CD4-positive, alpha-beta memory T cell (primary cell): ENCODE measurements at regions of chr1 and their contacts with region 1.

Region 1: DNA sequence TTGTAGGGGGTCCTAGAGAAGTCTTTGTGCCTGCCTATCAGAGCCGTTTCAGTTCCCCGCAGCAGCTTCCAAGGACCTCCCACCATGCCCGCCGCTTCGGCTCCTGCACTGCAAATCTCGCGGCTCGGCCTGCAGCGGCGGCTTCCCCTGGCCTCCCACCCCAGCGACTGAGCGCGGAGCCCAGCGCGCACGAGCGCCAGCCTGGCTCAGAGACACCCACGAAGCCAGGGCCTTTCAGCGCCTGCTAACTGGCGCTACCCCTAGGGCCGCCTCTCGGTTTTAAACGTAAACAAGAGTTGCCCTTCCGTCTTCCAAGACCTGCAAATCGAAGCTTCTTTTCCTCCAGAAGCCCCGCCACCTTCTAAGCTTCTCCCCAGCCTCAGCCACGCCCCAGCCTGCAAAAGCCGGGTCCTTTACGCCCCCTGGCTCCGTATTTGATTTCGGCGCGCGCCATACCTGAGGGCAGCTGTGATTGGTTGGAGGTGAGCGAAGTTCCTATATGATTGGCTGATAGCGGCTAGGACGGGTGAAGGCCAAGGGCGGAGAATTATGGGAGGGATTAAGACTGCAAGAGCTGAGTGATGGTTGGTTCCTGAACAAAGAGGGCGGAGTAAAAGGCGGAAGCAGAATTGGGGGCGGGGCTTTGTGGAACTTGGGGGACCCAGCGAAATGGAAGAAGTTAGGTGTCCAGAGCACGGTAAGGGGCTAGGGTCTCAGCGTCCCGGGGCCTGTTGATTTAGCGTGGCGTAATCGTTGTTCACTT is at the start of gene TTF2:
- DNase-seq: peak; percentile 97 to 99 (median 98)
- H3K4me3 ChIP-seq: peak within 1 kb of the TSS; percentile 77 to 85
- H3K4me3 Mint-ChIP-seq: no peak within 1 kb of the TSS
- H3K27ac ChIP-seq: peak within 1 kb of the TSS; percentile 75
- H3K27ac Mint-ChIP-seq: peak within 1 kb of the TSS in 2 of 7 donors; percentile 81 to 84
- H3K4me1 ChIP-seq: peaks cover 40% of the 10 kb centered on the region
- H3K4me1 Mint-ChIP-seq: peaks cover 23 to 46% (median 29%) of the 10 kb centered on the region in 4 donors
- H3K27me3 ChIP-seq: no peaks in the 10 kb centered on the region
- H3K27me3 Mint-ChIP-seq: no peaks in the 10 kb centered on the region
- total RNA-seq, gene TTF2: 26.4 to 29.5 TPM

Region 2: GRCh38 chr1:116139592-116140134 is 920.2 kb before region 1 on chr1:
- CTCF ChIA-PET with region 1: no interaction called
- POLR2A ChIA-PET with region 1: no interaction called
- intact Hi-C with region 1: loop called (anchors 5 kb)
- DNase-seq: no peak
- H3K4me3 ChIP-seq: no peak overlapping the region
- H3K4me3 Mint-ChIP-seq: no peak overlapping the region
- H3K27ac ChIP-seq: no peak overlapping the region
- H3K27ac Mint-ChIP-seq: no peak overlapping the region
- H3K4me1 ChIP-seq: no peaks in the 10 kb centered on the region
- H3K4me1 Mint-ChIP-seq: peaks cover 5 to 8% (median 6%) of the 10 kb centered on the region in 4 donors
- H3K27me3 ChIP-seq: no peaks in the 10 kb centered on the region
- H3K27me3 Mint-ChIP-seq: peaks cover 4 to 7% of the 10 kb centered on the region in 2 donors

Region 3: DNA sequence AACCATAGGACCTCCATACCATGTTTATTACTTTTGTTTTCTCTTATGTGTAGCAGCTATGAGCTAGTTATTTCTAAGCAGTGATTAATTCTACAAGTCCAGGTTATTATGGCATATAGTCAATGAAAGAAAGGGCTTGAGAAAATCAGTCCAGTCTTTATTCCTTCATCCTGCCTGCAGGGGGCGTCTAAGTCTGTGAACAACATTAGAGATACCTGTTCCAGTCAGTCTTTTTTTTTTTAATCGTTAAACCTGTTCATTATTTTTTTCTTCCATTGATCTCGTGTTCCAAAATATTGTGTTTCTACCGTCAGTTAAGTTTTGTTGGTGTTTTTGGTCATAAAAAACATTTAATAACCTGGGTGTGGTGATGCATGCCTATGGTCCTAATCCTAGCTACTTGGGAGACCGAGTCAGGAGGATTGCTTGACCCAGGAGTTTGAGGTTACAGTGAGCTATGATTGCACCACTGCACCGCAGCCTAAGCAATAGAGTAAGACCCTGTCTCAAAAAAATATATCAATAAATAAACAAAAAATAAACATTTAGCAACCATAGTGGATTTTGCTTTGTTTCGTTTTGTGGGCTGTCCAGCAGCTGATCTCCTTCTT is 335.0 kb before region 1 on chr1:
- CTCF ChIA-PET with region 1: interaction called, 160 read pairs
- POLR2A ChIA-PET with region 1: interaction called, 4 read pairs
- intact Hi-C with region 1: loop called (anchors 1 kb)
- DNase-seq: peak; percentile 67 to 81 (median 73)
- H3K4me3 ChIP-seq: no peak overlapping the region
- H3K4me3 Mint-ChIP-seq: no peak overlapping the region
- H3K27ac ChIP-seq: no peak overlapping the region
- H3K27ac Mint-ChIP-seq: peak overlapping the region in 3 of 7 donors; percentile 1 to 47 (median 39)
- H3K4me1 ChIP-seq: peaks cover 13% of the 10 kb centered on the region
- H3K4me1 Mint-ChIP-seq: peaks cover 6 to 27% (median 12%) of the 10 kb centered on the region in 4 donors
- H3K27me3 ChIP-seq: no peaks in the 10 kb centered on the region
- H3K27me3 Mint-ChIP-seq: no peaks in the 10 kb centered on the region

Region 4: GRCh38 chr1:116769561-116769977 is 290.3 kb before region 1 on chr1:
- CTCF ChIA-PET with region 1: interaction called, 4 read pairs
- POLR2A ChIA-PET with region 1: interaction called, 26 read pairs
- intact Hi-C with region 1: no loop called
- DNase-seq: peak; percentile 85 to 94 (median 89)
- H3K4me3 ChIP-seq: peak overlapping the region in 1 of 2 donors; percentile 24
- H3K4me3 Mint-ChIP-seq: peak overlapping the region; percentile 29 to 94 (median 74)
- H3K27ac ChIP-seq: peak overlapping the region; percentile 88
- H3K27ac Mint-ChIP-seq: peak overlapping the region; percentile 97 to 99 (median 98)
- H3K4me1 ChIP-seq: peaks cover 87% of the 10 kb centered on the region
- H3K4me1 Mint-ChIP-seq: peaks cover 75 to 91% (median 82%) of the 10 kb centered on the region in 4 donors
- H3K27me3 ChIP-seq: no peaks in the 10 kb centered on the region
- H3K27me3 Mint-ChIP-seq: no peaks in the 10 kb centered on the region

Region 5: DNA sequence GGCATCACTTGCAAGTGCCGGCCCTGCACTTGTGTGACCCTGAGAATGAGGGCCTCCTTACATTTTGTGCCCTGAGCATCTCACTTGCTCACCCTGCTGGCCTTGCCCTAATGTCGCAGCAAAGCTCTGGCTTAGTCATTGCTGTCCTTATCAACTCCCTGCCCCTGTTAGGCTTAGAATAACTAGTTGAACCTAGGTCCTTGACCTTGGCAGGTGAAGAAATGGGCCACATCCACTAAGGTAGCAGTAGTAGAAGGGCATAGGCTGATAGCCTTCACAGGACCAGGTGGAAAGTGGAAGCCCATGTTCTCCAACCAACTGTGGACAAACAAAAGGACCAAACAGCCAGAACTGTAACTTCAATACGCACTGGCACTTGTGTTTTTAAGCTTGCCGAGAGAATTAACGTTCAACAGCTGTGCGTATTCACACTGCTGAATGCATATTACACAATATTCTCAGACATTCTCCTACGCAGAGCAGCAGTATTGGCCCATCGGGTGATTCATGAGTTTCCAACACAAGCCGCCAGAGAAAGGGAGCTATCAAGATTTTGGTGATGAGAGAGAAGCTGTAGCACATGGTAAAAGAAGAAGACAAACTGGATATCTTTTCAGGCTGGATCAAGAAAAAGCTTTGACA is 177.9 kb before region 1 on chr1:
- CTCF ChIA-PET with region 1: interaction called, 5 read pairs
- POLR2A ChIA-PET with region 1: interaction called, 12 read pairs
- intact Hi-C with region 1: loop called (anchors 1 kb)
- DNase-seq: peak in 2 of 5 donors; percentile 5 to 20
- H3K4me3 ChIP-seq: no peak overlapping the region
- H3K4me3 Mint-ChIP-seq: no peak overlapping the region
- H3K27ac ChIP-seq: no peak overlapping the region
- H3K27ac Mint-ChIP-seq: peak overlapping the region in 1 of 7 donors; percentile 28
- H3K4me1 ChIP-seq: peaks cover 28% of the 10 kb centered on the region
- H3K4me1 Mint-ChIP-seq: peaks cover 0 to 5% (median 2%) of the 10 kb centered on the region in 4 donors
- H3K27me3 ChIP-seq: no peaks in the 10 kb centered on the region
- H3K27me3 Mint-ChIP-seq: no peaks in the 10 kb centered on the region

Region 6: DNA sequence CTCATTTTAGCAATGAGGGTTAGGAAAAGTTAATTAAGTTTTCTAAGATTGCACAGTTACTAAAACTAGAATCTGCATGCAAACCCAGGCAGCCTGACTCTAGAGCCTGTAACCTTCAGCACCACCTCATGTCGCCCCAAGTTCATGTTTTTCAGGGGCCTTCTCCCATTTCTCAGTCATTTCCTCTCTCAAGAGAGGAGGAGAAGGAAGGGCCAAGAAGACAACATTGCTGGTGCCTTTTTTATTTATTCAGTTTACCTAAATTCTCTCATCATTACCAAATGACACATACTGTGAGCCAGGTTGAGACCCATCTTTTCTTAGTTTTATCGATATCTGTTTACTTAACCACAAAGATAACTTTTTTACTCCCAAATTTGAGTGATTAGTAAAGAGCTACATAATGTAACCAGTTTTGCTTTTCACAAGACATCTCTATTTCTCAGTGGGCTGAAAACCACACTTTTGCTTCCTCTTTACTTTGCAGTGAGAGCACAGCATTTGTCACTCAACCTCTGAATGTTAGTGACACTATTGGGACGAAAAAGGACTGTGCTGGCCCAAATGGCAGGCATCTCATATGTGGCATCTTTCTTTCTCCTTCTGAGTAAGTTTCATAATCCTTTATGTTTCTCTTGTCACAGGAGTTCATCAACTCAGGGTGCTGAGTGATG is 58.5 kb before region 1 on chr1 and contains the start of gene CD101:
- CTCF ChIA-PET with region 1: interaction called, 5 read pairs
- POLR2A ChIA-PET with region 1: interaction called, 14 read pairs
- intact Hi-C with region 1: no loop called
- DNase-seq: peak in 2 of 5 donors; percentile 16 to 17
- H3K4me3 ChIP-seq: no peak within 1 kb of the TSS
- H3K4me3 Mint-ChIP-seq: peak within 1 kb of the TSS in 7 of 8 donors; percentile 4 to 69 (median 64)
- H3K27ac ChIP-seq: no peak within 1 kb of the TSS
- H3K27ac Mint-ChIP-seq: peak within 1 kb of the TSS; percentile 28 to 91 (median 76)
- H3K4me1 ChIP-seq: peaks cover 10% of the 10 kb centered on the region
- H3K4me1 Mint-ChIP-seq: peaks cover 20 to 31% (median 29%) of the 10 kb centered on the region in 4 donors
- H3K27me3 ChIP-seq: no peaks in the 10 kb centered on the region
- H3K27me3 Mint-ChIP-seq: no peaks in the 10 kb centered on the region
- total RNA-seq, gene CD101: 2.1 to 2.6 TPM

Region 7: DNA sequence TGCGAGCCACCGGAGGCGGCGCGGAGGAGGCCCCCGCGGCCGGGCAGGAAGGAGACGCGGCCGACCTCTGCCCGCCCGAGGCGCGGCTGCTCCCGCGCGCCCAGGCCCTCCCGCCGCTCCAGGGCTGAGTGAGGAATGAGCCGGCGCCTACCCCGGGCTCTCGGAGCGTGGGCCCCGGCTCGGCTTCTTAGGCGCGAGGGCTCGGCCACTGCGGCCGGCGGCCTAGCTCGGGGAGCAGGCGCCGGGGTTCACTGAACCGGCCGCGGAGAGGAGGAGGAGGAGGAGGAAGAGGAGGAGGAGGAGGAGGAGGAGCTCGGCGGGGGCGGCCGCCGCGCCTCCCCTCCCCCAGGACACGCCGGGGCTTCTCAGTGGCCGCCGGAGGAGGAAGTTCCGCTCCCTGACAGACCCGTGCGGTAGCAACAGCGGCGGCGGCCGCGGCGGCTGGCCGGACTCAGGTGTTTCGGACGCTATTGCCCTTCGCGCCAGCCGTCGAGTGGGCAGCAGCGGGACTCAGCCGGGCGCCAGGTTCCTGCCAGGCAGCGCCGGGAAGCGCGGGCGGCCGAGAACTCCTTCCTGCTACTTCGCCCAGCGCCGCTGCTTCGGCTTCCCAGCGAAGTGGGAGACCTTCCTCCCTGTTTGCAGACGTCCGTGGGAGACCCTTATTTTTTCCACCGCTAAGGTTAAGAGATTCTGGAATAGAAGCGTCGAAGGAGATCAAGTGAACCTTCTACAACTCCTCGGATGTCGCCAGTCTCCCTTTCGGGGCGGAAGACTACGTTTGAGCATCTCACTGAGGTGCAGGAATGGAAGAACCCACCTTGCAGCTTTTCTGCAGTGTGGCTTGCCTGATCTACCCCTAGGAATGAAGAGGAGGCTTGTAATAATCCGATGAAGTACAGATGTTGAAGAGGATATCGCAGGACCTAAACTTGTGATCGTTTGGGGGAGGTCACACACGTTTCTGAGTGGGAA is 307.5 kb after region 1 on chr1 and contains the start of gene MAN1A2:
- CTCF ChIA-PET with region 1: no interaction called
- POLR2A ChIA-PET with region 1: interaction called, 9 read pairs
- intact Hi-C with region 1: loop called (anchors 10 kb)
- DNase-seq: peak; percentile 66 to 84 (median 69)
- H3K4me3 ChIP-seq: peak within 1 kb of the TSS; percentile 72 to 92
- H3K4me3 Mint-ChIP-seq: peak within 1 kb of the TSS; percentile 93 to 97 (median 96)
- H3K27ac ChIP-seq: peak within 1 kb of the TSS; percentile 70
- H3K27ac Mint-ChIP-seq: peak within 1 kb of the TSS; percentile 96 to 99 (median 97)
- H3K4me1 ChIP-seq: peaks cover 74% of the 10 kb centered on the region
- H3K4me1 Mint-ChIP-seq: peaks cover 53 to 84% (median 63%) of the 10 kb centered on the region in 4 donors
- H3K27me3 ChIP-seq: no peaks in the 10 kb centered on the region
- H3K27me3 Mint-ChIP-seq: no peaks in the 10 kb centered on the region
- total RNA-seq, gene MAN1A2: 57.0 to 66.5 TPM